Breast epithelium (tissue), 4 donors: ENCODE measurements at regions of chr16 and their contacts with region 1.

Region 1: GRCh38 chr16:86367291-86368072 is 142.8 kb upstream of the FOXF1 start:
- DNase-seq: no peak
- H3K4me3 ChIP-seq: no peak overlapping the region
- H3K27ac ChIP-seq: no peak overlapping the region
- H3K4me1 ChIP-seq: no peaks in the 10 kb centered on the region
- H3K27me3 ChIP-seq: peaks cover 0 to 62% of the 10 kb centered on the region in 2 donors
- CTCF ChIP-seq: no peak
- POLR2A ChIP-seq: no peak

Region 2: DNA sequence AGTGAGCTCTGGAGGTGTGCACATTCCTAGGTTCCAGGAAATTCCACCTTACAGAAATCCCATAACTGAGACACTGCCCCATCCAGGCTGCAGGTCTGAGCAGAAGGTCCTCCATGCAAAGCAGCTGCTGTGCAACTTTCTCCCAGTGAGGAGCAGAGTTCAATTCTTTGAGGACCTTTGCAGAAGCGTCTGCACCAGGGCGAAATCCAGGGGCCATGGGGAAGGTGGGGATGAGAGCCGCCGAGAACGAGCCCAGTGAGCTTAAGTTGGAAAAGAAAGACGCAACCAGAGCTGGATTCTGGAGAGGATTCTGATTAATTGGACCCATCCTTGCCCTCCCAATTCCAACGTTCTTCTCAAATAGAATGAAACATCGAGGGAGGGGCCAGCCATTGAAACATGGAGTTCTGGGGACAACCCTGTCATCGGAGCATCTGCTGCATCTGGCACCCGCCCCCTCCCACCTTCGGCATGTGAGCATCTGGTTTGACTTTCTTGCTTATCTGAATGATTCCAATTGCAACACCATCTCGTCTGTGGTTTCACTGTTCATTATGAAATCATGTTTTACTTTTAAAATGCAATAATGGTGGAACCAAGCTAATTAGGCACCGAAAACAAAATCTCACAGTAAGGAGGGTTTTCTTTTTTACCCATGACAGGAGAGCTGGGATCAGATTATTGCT is 47.8 kb before region 1 on chr16:
- intact Hi-C with region 1: loop called (anchors 2 kb)
- DNase-seq: no peak
- H3K4me3 ChIP-seq: no peak overlapping the region
- H3K27ac ChIP-seq: no peak overlapping the region
- H3K4me1 ChIP-seq: no peaks in the 10 kb centered on the region
- H3K27me3 ChIP-seq: peaks cover 0 to 47% of the 10 kb centered on the region in 2 donors
- CTCF ChIP-seq: no peak
- POLR2A ChIP-seq: no peak

Region 3: GRCh38 chr16:86432691-86433090 is 65.2 kb after region 1 on chr16:
- intact Hi-C with region 1: loop called (anchors 2 kb)
- DNase-seq: no peak
- H3K4me3 ChIP-seq: no peak overlapping the region
- H3K27ac ChIP-seq: no peak overlapping the region
- H3K4me1 ChIP-seq: no peaks in the 10 kb centered on the region
- H3K27me3 ChIP-seq: peaks cover 0 to 57% of the 10 kb centered on the region in 2 donors
- CTCF ChIP-seq: no peak
- POLR2A ChIP-seq: no peak